ENCODE measurements at regions of chr10 and their contacts with region 1.

Region 1: DNA sequence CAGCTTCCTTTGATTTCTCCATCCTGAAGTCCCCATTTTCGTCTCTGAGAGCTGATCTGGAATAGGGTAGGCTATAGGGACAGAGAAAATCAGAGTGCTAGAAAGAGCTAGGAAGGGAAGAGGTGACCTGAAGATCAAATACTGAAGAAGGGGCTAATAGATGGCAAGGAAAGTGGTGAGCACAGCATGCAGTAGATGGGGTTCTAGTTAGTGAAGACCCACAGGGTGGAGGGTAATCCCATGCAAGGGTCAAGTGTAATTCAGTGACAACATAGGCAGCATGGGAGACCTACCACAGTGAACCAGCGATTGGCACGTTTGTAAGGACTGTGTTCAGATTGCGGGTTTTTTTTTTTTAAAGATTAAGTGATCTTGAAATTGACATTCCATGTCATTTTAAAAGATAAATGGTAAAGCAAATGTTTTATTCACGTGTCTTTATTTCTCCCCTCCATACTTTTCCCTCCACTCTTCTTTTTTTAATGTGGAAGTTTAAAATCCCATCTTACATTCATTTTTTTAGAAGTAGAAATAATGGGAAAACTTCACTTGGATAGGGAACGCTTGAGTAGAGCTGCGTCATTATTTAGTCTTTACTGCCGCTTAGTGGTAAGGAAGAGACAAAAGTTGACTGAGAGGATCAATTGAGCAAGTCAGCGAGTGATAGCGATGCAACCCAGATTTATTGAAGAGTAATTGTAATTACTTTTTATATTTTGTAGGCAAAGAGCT is 21.0 kb upstream of the ABI1 start:
- DNase-seq: no peak
- H3K4me3 ChIP-seq: no peak overlapping the region
- CTCF ChIP-seq: peak; percentile 67

Region 2: DNA sequence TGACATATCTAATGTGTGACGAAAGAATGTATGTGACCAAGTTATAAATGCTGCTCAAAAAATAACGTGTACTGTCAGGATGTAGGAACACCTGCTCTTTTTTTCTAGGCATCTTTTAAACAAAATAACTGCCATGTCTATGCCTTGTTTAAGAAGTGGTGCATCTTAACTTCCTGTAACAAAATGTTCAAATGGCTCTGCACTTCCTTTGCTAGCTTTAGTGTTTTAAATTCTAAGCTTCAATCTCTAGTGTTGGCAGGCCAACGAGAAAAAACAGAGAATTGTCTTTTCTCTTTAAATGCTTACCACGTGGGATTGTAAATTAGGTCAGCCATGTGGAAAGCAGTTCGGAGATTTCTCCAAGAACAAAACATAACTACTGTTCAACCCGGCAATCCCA is 198.8 kb before region 1 on chr10:
- CTCF ChIA-PET with region 1: interaction called, 50 read pairs
- POLR2A ChIA-PET with region 1: no interaction called
- DNase-seq: no peak
- H3K4me3 ChIP-seq: no peak overlapping the region
- CTCF ChIP-seq: no peak

Region 3: GRCh38 chr10:26697163-26697921 is 184.4 kb before region 1 on chr10 and contains the start of gene PDSS1:
- CTCF ChIA-PET with region 1: interaction called, 12 read pairs
- POLR2A ChIA-PET with region 1: no interaction called
- DNase-seq: no peak
- H3K4me3 ChIP-seq: peak within 1 kb of the TSS; percentile 86
- CTCF ChIP-seq: no peak

Region 4: GRCh38 chr10:26714415-26715136 is 167.2 kb before region 1 on chr10:
- CTCF ChIA-PET with region 1: interaction called, 14 read pairs
- POLR2A ChIA-PET with region 1: no interaction called
- DNase-seq: no peak
- H3K4me3 ChIP-seq: no peak overlapping the region
- CTCF ChIP-seq: no peak

Region 5: DNA sequence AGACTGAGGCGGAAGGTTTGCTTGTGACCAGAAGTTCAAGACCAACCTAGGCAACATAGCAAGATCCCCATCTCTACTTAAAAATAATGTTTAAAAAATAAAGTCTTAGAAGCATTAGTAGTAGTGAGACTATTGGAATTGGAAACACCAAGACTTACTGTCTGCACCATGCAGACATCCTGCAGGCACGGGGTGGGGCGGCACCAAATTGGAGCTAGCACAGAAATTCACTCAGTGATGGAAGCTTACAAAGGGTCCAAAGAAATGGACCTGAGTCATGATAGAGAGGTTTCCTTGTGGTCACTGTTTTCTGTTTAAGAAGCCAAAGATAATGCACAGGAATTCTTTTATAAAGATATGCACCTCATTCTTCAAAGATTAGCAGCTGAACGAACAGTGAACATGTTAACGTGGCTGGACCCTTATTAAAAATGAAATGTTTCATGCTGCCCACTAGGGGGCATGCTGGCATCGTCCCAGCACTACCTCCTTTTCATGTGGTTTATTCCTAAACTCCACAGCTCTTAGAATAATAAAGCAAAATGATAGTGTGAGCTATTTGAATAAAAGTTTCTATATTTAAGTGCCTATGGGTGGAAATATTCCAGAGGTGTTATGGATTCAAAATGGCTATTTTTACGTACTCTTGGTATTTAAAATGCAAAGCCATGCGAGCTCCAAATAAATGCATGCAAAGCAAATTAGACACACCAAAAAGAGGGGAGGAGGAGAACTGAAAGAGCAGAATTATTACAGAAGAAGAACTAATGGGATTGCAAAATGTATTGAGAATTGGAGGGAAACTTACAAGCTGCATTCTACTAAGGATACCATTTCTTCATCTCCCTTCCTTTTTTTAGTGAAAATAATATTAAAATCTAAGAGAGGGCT is 155.7 kb before region 1 on chr10:
- CTCF ChIA-PET with region 1: interaction called, 361 read pairs
- POLR2A ChIA-PET with region 1: no interaction called
- DNase-seq: no peak
- H3K4me3 ChIP-seq: no peak overlapping the region
- CTCF ChIP-seq: peak; percentile 65

Region 6: DNA sequence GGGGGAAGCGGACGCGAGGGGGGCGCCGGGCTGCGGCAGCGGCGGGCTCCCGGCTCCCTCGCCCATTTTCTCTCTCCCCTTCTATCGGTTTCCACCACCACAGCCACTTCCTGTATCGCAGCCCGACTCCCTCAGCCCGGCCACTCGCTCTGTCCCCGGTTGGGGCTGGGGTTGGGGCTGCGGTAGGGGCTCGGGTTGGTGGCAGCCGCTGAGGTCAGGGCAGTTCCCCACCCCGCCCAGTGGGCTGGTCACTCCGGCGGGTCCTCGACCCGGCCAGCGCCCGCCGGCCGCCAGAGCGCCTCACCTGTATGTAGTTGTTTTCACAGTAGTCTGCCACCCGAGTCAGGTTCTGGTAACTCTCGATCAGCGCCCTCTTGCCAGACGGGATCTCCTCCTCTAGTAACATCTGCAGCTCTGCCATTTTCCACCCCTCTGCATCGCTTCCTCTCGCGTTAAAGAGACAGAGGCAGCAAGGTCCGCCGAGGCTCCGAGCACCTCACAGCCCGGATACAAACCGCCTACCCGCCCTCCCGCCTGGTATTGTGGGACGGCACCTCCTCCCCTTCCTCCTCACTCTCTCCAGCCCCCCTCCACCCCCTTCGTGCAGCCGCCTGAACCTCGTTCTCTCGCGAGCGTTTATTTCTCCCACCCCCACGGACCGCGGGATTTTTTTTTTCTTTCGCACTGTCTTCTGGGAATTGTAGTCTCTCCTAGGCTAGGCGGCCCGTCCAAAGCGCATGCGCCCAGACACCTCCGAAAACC is 21.1 kb before region 1 on chr10 and contains the start of gene ABI1:
- CTCF ChIA-PET with region 1: interaction called, 38 read pairs
- POLR2A ChIA-PET with region 1: interaction called, 3 read pairs
- DNase-seq: peak; percentile 92
- H3K4me3 ChIP-seq: peak within 1 kb of the TSS; percentile 85
- CTCF ChIP-seq: no peak

Region 7: GRCh38 chr10:26869528-26869927 is 12.2 kb before region 1 on chr10:
- CTCF ChIA-PET with region 1: interaction called, 22 read pairs
- POLR2A ChIA-PET with region 1: no interaction called
- DNase-seq: no peak
- H3K4me3 ChIP-seq: no peak overlapping the region
- CTCF ChIP-seq: no peak